Cardiac septum (tissue), 1 donor: ENCODE measurements at regions of chr16 and their contacts with region 1.

Region 1: DNA sequence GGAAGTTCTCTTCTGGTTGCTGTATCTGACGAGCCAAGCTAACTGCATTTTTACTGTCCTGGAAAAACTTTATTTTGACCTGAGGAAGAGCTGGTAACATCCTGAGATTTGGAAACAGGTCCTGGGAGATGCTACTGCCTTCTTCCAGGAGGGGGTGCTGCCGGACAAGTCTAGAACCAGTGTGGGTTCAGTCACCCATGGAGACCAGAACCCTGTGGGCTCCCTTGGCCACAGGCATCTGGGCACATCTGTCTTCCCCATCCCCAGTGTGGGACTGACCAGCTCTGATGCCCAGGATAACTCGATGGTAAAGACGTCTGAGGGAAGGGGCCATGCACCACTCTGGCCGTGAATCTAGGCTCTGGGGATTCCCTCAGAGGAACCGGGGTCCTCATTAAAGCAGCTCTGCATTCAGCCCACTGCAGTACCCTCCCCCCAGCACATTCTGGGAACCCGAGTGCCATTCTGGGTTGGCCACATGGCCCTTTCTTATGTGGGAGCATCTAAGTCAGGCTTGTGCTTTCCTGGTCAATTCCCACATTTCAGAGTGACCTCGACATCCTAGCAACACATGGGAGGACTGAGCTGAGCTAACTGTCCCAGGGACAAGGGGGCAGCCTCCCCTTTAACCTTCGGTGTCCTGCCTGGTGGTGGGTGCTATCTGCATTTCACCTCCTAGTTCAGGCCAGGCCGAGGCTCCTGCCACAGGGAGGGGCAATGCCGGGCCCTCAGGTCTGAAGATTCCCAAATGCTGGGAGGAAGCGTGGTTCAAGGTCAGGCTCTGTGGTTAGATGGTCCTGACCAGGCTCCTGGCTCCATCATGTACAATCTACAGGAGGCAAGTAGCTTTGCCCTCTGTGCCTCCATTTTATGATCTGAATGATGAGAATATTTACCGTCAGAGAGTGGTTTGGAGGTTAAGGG is 6.4 kb downstream of the C16orf86 start:
- DNase-seq: no peak

Region 2: GRCh38 chr16:66977341-66978113 is 695.5 kb before region 1 on chr16:
- intact Hi-C with region 1: no loop called
- DNase-seq: peak; percentile 94

Region 3: DNA sequence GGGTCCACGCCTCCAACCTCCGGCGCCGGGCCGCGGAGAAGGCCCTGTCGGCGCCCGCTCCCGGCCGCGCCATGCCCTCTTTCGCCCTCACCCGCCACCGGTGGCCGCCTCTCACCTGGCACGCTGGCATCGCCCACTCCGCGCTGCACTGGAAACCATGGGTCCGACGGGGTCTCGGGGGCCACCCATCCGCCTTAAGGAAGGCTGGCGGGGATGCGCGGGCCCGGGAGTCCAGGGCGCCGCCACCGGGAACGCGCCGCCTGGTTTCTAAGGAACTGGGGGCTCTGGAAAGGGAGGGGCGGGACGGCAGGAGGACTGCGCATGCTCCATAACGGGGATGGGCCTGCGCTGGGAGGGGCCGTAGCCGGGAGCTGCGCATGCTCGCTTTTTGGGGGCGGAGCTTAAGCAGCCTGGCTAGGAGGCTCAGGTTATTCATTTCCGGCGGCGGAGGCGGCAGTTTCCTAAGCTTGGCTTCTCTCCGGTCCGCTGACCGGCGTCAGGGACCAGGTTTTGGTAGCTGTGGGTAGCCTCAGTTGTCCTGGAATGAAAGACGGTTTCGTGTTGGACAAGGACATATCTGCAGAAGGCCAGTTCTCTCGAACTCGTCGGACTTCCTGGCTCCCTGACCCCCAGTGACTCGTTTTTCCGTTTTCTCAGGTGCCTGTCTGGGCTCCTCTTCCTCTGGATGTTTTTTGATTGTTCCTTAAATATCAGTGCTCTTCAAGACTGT is 46.2 kb after region 1 on chr16 and contains the start of gene GFOD2:
- intact Hi-C with region 1: loop called (anchors 5 kb)
- DNase-seq: peak; percentile 99
- total RNA-seq, gene GFOD2: 10.7 TPM

Region 4: GRCh38 chr16:67806428-67807147 is 133.6 kb after region 1 on chr16 and contains the starts of genes RANBP10 and TSNAXIP1:
- intact Hi-C with region 1: loop called (anchors 5 kb)
- DNase-seq: peak; percentile 98
- total RNA-seq, gene RANBP10: 16.4 TPM
- total RNA-seq, gene TSNAXIP1: 0.51 TPM

Region 5: GRCh38 chr16:67928561-67929364 is 255.8 kb after region 1 on chr16:
- intact Hi-C with region 1: loop called (anchors 5 kb)
- DNase-seq: no peak